Right ventricle myocardium inferior (tissue), 1 donor: ENCODE measurements at regions of chrX and their contacts with region 1.

Region 1: DNA sequence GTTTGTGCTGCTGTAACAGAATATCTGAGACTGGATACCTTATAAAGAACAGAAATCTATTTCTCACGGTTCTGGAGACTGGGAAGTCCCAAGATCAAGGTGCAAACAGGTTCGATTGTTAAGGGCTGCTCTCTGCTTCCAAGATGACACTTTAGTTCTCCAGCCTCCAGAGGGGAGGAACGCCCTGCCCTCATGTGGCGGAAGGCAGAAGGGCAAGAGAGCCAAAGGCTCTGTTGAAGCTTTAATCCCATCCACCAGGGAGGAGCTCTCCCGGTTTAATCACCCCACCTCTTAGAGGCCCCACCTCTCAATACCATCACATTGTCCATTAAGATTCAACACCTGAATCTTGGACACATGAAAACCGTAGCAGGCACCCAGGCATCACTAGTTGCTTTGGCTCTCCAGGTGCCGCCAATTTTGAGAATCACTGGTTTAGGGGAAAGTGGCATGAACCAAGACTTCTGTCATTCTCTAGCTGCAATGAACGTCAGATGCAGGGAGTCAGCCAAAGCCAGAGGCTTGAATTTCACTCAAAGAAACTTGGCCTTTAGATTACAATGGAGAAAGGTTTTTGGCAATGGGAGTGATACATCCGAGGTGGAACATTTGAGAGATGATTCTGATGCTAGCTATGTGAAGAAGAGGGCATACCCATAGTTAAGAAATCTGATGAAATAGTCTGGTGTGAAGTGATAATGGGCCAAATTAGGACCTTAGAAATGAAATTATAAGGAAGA is 15.7 kb downstream of the FHL1 start:
- DNase-seq: no peak
- ATAC-seq: peak; percentile 71

Region 2: DNA sequence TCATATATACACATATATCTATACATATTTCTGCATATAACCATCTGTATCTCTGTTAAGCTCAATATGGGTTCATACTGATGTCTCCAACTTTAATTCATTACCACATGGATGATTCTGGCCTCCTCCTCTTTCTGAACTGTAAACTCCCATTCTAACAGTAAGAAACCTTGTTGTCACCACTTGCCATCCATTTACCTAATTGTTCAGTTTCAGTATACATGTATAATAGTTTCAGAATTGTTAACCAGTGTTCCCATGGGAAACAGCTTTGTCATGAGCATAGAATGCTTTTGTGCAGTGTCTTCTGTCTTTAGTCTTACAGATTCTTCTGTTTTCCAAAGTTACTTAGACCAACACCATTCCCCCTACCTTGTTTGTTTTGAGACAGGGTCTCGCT is 141.8 kb before region 1 on chrX:
- intact Hi-C with region 1: no loop called
- DNase-seq: no peak
- ATAC-seq: no peak

Region 3: DNA sequence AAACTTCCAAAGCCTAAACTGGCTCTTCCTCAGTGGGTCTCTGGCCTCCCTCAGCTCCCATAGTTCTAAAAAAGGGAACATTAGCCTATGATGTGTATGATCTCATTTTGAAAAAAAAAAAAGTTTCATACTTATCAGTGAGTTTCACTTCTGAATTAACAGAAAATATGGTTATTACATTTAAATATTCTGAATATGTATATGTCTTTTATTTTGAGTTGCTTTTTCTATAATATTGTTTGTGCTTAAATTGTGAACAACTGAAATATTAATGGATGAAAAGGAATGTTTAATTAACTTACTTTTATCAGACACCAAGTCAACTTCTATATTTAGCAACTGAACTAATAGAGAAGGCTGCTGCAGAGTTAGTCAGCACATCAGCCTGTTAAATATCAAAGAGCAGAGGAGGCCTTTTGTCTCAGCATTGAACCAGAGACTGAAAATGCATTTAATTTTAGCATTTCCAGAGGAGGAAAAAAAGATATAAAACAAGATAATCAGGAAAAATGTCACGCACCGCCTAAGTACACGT is 36.1 kb before region 1 on chrX:
- intact Hi-C with region 1: loop called (anchors 2 kb)
- DNase-seq: no peak
- ATAC-seq: no peak

Region 4: GRCh38 chrX:136259543-136259942 is 96.5 kb after region 1 on chrX:
- intact Hi-C with region 1: no loop called
- DNase-seq: no peak
- ATAC-seq: peak; percentile 43

Region 5: DNA sequence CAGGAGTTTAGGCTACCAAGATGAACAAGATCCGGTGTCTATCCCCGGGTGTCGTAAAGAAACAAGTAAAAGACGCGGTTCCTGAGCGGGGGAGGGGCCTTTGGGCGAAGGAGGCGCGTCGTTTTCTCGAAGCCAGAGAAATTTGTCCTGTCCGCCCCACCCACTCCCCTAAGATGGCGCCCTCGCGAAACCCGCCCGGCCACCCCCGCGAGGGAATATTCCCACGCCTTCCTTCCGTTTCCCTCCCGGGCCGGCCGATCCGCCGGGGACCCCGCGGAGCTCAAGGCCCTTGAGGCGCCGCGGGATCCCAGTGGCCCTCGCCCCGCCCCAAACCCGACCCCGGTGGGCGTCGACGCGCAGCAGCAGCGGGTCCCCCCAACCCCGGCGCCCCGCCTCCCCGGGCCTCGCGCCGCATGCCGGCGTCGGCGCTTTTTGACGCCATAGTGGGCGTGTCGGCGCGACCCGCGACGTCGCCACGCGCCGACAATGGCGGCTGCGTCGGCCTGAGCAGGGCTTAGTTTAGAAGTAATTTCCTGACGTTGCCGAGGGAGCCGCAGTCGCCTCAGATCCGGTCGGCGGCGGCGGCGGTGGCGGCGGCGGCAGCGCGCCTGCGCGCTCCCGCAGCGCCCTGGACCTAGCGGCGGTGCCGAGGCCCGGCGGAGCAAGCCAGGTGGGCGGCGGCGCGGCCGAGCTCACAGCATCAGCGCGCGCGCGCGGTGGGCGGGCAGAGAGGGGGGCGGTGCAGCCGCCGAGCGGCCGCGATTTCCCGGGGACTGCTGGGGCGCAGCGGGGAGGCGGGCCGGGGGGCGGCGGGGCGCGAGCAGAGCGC is 334.0 kb after region 1 on chrX and contains the start of gene HTATSF1:
- intact Hi-C with region 1: loop called (anchors 10 kb)
- DNase-seq: peak; percentile 90
- ATAC-seq: peak; percentile 93
- total RNA-seq, gene HTATSF1: 57.3 TPM